ENCODE measurements at regions of chr2 and their contacts with region 1.

Region 1: DNA sequence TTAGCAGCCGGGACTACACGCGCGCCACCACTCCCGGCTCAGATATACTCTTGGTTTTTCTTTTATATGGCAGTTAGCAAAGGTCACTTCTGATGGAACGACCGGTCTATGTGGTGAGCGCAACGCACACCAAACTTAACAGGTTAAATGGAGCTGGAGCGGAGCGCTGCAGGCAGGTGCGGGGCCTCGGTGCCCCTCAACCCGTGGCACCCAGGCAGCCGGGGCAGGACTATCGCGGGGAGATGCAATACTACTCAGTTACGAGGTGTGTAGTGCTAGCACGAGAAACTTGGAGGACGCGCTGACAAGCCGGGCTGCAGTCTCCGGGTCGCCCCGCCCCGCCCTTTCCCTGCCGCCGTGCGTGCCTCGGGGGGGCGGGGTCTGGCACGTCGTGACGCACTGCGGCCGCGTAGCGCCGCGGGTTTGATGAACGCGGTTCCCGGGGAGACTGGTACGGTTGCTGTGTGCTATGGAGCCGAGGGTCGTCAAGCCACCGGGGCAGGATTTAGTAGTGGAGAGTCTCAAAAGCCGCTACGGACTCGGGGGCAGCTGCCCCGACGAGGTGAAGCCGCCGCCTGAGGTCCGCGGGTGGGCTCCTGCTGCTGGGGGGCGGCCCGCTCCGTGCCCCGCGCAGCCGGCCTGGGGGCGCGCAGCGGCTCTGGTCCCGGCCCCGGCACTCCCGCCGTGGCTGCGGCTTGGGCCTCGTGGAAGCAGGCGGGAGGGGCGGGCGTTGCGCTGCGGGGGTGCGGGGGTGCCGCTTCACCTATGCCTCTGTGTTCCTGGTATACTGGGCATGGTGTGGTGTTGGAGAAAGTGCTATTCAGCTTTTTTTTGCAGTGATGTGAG is at the start of gene CCDC138:
- DNase-seq: peak; percentile 91
- H3K4me3 Mint-ChIP-seq: peak within 1 kb of the TSS; percentile 100
- H3K27ac Mint-ChIP-seq: peak within 1 kb of the TSS; percentile 100
- H3K4me1 Mint-ChIP-seq: peaks cover 24% of the 10 kb centered on the region
- H3K27me3 Mint-ChIP-seq: no peaks in the 10 kb centered on the region
- total RNA-seq, gene CCDC138: 20.0 and 23.4 TPM in 2 replicates

Region 2: GRCh38 chr2:108533832-108534583 is 252.6 kb before region 1 on chr2 and contains the start of gene LIMS1:
- intact Hi-C with region 1: loop called (anchors 5 kb)
- DNase-seq: peak; percentile 76
- H3K4me3 Mint-ChIP-seq: peak within 1 kb of the TSS; percentile 96
- H3K27ac Mint-ChIP-seq: peak within 1 kb of the TSS; percentile 97
- H3K4me1 Mint-ChIP-seq: peaks cover 65% of the 10 kb centered on the region
- H3K27me3 Mint-ChIP-seq: peaks cover 2% of the 10 kb centered on the region
- total RNA-seq, gene LIMS1: 69.6 and 70.0 TPM in 2 replicates

Region 3: GRCh38 chr2:108607706-108608301 is 178.8 kb before region 1 on chr2:
- intact Hi-C with region 1: loop called (anchors 5 kb)
- DNase-seq: no peak
- H3K4me3 Mint-ChIP-seq: no peak overlapping the region
- H3K27ac Mint-ChIP-seq: peak overlapping the region; percentile 53
- H3K4me1 Mint-ChIP-seq: peaks cover 84% of the 10 kb centered on the region
- H3K27me3 Mint-ChIP-seq: no peaks in the 10 kb centered on the region

Region 4: GRCh38 chr2:108805782-108806181 is 19.2 kb after region 1 on chr2:
- intact Hi-C with region 1: loop called (anchors 2 kb)
- DNase-seq: no peak
- H3K4me3 Mint-ChIP-seq: no peak overlapping the region
- H3K27ac Mint-ChIP-seq: no peak overlapping the region
- H3K4me1 Mint-ChIP-seq: no peaks in the 10 kb centered on the region
- H3K27me3 Mint-ChIP-seq: no peaks in the 10 kb centered on the region

Region 5: GRCh38 chr2:108820482-108820881 is 33.9 kb after region 1 on chr2:
- intact Hi-C with region 1: no loop called
- DNase-seq: no peak
- H3K4me3 Mint-ChIP-seq: no peak overlapping the region
- H3K27ac Mint-ChIP-seq: no peak overlapping the region
- H3K4me1 Mint-ChIP-seq: no peaks in the 10 kb centered on the region
- H3K27me3 Mint-ChIP-seq: no peaks in the 10 kb centered on the region

Region 6: DNA sequence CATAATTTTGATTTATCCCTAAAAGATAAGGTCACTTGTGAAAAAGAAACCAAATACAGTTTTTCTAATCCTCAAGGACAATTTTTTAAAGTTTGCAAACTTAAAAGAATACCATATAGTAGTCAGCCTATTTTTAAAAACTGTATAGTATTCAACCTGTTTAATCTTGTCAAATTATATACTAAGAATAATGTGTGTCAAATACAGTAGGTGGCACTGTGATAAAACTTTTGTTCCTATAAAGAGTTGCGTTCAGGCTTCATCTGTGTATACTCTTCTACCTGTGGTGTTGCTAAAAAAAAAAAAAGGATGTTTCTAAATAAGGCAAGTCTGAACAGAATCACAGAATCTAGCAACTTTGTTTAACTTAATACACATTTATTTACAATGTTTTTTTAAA is 68.6 kb after region 1 on chr2:
- intact Hi-C with region 1: no loop called
- DNase-seq: no peak
- H3K4me3 Mint-ChIP-seq: no peak overlapping the region
- H3K27ac Mint-ChIP-seq: no peak overlapping the region
- H3K4me1 Mint-ChIP-seq: peaks cover 7% of the 10 kb centered on the region
- H3K27me3 Mint-ChIP-seq: no peaks in the 10 kb centered on the region

Region 7: DNA sequence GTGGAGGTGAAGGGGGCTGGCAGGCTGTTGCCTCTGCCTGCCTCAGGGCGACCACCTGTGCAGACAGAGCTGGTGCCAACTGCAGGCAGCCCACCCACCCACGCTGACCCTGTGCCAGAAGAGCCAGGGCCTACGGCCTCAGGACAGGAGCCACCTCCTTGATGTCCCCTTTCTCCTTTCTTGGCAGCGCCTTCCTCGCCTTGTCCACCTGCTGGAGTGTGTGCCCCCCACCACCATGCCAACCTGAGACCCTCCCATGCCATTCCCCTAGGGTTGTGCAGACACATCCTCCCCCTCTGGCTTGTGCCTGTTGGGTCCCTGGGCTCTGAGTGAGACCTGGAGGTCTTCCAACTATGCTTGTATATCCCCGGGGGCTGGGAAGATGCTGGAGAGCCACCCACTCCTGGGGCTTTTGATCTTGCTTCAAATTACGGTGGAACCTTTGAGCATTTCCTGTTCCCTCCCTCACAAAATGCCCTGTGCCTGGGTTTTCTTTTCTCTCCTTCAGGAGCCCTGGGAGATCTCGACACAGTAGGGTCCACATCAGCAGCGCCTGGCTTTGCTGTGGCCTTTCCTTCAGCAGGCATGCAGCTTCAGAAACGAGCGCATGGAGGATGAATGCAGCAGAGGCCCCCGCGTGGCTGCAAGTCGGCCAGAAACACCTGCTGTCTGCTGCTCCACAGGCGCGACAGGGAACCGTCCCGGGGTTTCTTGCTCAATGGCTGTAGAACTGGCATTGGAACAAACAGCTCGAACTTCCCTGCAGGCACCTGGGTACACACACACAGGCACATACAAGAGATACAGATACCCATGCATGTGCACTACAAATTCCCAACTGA is 276.5 kb after region 1 on chr2:
- intact Hi-C with region 1: no loop called
- DNase-seq: no peak
- H3K4me3 Mint-ChIP-seq: no peak overlapping the region
- H3K27ac Mint-ChIP-seq: no peak overlapping the region
- H3K4me1 Mint-ChIP-seq: no peaks in the 10 kb centered on the region
- H3K27me3 Mint-ChIP-seq: no peaks in the 10 kb centered on the region

Region 8: GRCh38 chr2:109213646-109214417 is 427.3 kb after region 1 on chr2:
- intact Hi-C with region 1: loop called (anchors 10 kb)
- DNase-seq: peak; percentile 74
- H3K4me3 Mint-ChIP-seq: peak overlapping the region; percentile 72
- H3K27ac Mint-ChIP-seq: peak overlapping the region; percentile 93
- H3K4me1 Mint-ChIP-seq: peaks cover 82% of the 10 kb centered on the region
- H3K27me3 Mint-ChIP-seq: peaks cover 68% of the 10 kb centered on the region

Measured in activated T-helper 1 cell treated with anti-CD3 and anti-CD28 coated beads, Interleukin-12 subunit alpha, Interleukin-12 subunit beta, Interleukin-2, Interleukin-4 antibody, amounts not matched to agents 30 ng/mL and 10 ng/mL and 1 ng/mL, durations not matched to agents 14 hours and 24 hours and 36 hours (primary cell).